Aorta (tissue), 5 donors: ENCODE measurements at regions of chr16 and their contacts with region 1.

Region 1: DNA sequence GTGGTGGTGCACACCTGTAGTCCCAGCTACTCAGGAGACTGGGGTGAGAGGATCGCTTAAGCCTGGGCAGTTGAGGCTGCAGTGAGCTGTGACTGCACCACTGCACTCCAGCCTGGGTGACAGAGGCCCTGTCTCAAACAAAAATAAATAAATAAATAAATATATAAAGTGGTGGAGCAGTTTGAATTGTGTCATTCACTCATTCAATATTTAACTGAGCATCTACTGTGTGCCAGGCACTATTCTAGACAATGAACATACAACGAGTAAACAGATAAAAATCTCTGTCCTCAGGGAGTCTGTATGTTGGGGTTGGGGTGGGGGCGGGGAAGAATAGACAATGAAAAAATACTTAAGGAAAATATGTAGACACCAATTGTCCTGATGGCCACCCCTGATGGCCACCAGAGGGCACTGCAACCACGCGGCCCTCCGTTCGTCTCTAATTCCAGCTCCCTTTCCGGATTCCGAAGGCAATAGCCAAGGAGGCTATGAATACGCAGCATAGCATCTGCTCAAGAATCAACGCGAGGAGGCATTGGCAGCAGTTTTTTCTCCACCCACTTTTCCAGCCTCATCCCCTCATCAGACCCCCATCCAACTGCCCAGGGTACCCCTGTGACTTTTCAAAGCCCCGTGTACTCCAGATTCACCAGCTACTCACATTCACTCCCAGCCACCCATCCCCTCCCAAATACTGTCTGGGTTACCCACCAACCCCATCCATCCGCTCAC is 21.4 kb downstream of the QPRT start:
- DNase-seq: peak; percentile 83 to 89
- ATAC-seq: peak; percentile 92
- H3K4me3 ChIP-seq: no peak overlapping the region
- H3K27ac ChIP-seq: no peak overlapping the region
- H3K4me1 ChIP-seq: no peaks in the 10 kb centered on the region
- H3K27me3 ChIP-seq: no peaks in the 10 kb centered on the region

Region 2: DNA sequence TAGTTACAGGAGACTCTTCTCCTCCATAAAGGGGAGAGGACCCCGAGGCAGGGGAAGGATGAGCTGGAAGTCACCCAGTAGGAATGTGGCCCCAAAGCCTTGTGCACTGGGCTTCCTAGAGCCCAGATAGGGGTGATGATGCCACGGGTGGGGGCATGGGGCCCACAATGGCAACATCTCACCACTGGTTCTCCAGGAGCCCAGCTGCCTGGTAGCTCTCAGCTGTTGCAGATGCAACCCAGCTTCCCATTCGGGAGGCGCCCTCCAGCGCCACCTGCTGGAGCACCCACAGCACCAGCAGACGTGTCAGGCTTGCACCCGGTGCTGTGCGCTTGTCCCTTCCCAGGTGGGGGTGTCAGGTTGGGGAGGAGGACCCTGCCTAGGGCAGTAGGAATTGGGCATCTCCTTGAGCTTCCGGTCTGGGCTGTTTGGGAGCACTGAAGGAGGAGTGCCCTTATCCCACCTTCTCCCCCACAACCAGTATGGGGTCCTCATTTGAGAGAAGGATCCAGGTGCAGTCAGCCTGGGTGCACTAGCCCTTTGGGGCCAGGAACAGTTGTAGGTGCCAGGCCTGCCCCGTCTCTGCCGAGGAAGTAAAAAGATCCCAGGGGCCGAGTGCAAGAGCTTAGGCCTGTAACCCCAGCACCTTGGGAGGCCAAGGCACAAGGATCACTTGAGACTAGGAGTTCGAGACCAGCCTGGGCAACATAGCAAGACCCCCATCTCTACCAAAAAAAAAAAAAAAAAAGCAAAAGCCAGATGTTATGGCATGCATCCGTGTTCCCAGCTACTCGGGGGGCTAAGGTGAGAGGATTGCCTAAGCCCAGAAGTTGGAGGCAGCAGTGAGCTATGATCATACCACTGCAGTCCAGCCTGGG is 148.2 kb after region 1 on chr16:
- intact Hi-C with region 1: loop called in 1 of 2 experiments (anchors 10 kb)
- DNase-seq: peak; percentile 87 to 93
- ATAC-seq: peak; percentile 86
- H3K4me3 ChIP-seq: no peak overlapping the region
- H3K27ac ChIP-seq: peak overlapping the region in 1 of 2 donors; percentile 38
- H3K4me1 ChIP-seq: no peaks in the 10 kb centered on the region
- H3K27me3 ChIP-seq: no peaks in the 10 kb centered on the region

Region 3: GRCh38 chr16:30018731-30019158 is 318.3 kb after region 1 on chr16:
- intact Hi-C with region 1: loop called (anchors 2 to 10 kb)
- DNase-seq: no peak
- ATAC-seq: no peak
- H3K4me3 ChIP-seq: no peak overlapping the region
- H3K27ac ChIP-seq: no peak overlapping the region
- H3K4me1 ChIP-seq: no peaks in the 10 kb centered on the region
- H3K27me3 ChIP-seq: no peaks in the 10 kb centered on the region